ENCODE measurements at regions of chr15 and their contacts with region 1.

Region 1: GRCh38 chr15:97909291-97909891 is 51.1 kb upstream of the ARRDC4 start:
- H3K4me3 Mint-ChIP-seq: no peak overlapping the region
- H3K27ac Mint-ChIP-seq: no peak overlapping the region
- H3K4me1 Mint-ChIP-seq: peaks cover 20% of the 10 kb centered on the region
- H3K27me3 Mint-ChIP-seq: peaks cover 36% of the 10 kb centered on the region

Region 2: GRCh38 chr15:97849183-97849582 is 60.2 kb before region 1 on chr15:
- intact Hi-C with region 1: no loop called
- H3K4me3 Mint-ChIP-seq: no peak overlapping the region
- H3K27ac Mint-ChIP-seq: no peak overlapping the region
- H3K4me1 Mint-ChIP-seq: peaks cover 7% of the 10 kb centered on the region
- H3K27me3 Mint-ChIP-seq: no peaks in the 10 kb centered on the region

Region 3: DNA sequence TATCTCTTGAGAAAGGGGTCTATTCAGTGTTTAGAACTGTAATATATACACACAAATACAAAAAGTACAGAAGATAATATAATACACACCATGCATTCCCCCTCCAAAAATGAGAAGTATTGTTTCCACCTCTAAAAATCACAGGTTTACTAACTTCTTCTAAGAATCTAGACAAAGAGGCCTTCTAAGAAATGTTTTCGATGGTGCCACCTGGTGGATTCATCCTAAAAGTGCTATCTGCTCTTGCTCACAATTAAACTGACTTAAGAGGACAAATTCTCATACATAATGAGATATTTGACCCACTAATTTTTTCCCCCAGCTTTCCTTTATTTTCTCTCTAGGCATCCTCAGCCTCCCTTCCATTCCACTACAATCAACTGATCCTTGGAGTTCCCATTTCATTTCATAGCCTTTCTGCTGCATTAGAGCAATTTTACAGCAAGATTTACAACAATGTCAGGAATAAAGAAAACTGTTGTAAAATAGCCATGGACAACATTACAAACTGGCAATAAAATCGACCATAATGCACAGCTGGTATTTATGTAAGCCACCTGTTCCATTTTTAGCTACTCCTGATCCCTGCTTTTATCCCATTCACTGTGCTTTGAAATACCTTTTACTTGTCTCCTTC is 175.7 kb after region 1 on chr15:
- intact Hi-C with region 1: loop called (anchors 1 kb)
- H3K4me3 Mint-ChIP-seq: no peak overlapping the region
- H3K27ac Mint-ChIP-seq: no peak overlapping the region
- H3K4me1 Mint-ChIP-seq: peaks cover 47% of the 10 kb centered on the region
- H3K27me3 Mint-ChIP-seq: peaks cover 2% of the 10 kb centered on the region

Region 4: GRCh38 chr15:98292442-98293240 is 383.2 kb after region 1 on chr15:
- intact Hi-C with region 1: loop called (anchors 5 kb)
- H3K4me3 Mint-ChIP-seq: no peak overlapping the region
- H3K27ac Mint-ChIP-seq: no peak overlapping the region
- H3K4me1 Mint-ChIP-seq: no peaks in the 10 kb centered on the region
- H3K27me3 Mint-ChIP-seq: peaks cover 26% of the 10 kb centered on the region